Cardiac septum (tissue), 1 donor: ENCODE measurements at regions of chr3 and their contacts with region 1.

Region 1: DNA sequence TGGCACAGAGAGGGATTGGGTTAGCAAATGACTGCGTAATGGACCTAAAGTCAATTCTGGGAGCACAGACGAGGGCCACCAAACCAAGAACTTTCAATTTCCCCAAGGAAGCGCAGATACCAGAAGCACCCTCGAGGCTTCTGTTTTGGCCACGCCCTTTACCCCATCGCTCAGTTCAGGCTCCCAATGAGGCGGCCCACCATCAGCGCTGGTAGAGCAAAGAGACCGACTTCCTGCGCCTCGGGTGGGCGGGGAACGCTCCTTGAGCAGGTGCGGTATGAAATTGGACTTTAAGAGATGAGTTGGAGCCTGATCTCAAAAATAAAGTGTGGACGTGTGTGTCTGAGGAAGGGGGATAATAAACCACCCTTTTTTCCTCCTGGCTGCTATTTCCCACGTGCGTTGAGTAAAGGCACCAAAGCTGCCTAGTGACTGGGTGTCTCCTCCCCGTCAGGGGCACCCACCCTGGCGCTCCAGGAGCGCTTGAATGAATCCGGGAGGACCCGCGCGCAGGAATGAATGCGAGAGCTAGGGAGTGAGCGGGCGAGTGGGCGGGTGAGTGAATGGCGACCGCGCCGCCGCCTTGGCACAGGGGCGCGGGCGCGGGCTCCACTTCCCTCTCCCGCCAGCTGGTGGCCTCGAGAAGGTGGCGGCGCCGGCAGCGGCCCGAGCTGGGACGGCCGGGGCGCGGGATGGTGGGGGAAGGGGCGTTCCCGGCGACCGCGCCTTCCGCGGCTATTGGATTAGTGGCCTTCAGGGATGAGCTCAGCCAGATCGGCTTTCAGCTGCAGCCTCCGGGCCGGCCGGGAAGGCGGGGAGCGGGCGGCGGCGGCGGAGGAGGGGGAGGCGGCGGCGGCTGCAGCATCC is at the start of gene SPSB4:
- DNase-seq: peak; percentile 84
- total RNA-seq, gene SPSB4: 4.9 TPM

Region 2: DNA sequence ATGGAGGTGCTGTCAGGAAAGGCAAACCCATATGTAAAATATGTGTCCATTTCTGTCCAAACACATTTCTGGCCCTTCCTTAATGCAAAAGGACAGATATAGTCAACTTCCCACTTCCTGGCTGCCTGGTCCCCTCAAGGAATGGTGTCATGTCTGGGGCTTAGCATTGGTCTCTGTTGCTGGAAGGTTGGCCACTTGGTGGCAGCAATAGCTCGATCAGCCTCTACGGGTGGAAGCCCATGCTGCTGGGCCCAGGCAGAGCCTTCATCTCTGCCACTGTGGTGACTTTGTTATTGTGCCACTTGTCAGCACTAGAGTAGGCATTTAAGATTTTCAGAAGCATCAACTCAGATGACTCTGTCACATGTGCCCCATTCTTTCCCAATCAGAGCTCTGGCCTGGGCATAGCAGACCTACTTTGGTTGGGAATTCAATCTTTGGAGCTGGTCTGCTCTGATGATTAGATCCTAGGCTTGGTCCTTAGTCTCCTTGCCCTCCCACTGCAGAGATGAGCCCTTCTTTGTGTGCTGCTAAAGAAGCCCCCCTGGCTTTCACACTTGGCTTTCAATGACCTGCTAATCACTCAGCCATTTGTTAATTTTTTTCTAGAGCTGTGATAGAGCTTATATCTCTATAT is 50.7 kb before region 1 on chr3:
- intact Hi-C with region 1: no loop called
- DNase-seq: no peak

Region 3: DNA sequence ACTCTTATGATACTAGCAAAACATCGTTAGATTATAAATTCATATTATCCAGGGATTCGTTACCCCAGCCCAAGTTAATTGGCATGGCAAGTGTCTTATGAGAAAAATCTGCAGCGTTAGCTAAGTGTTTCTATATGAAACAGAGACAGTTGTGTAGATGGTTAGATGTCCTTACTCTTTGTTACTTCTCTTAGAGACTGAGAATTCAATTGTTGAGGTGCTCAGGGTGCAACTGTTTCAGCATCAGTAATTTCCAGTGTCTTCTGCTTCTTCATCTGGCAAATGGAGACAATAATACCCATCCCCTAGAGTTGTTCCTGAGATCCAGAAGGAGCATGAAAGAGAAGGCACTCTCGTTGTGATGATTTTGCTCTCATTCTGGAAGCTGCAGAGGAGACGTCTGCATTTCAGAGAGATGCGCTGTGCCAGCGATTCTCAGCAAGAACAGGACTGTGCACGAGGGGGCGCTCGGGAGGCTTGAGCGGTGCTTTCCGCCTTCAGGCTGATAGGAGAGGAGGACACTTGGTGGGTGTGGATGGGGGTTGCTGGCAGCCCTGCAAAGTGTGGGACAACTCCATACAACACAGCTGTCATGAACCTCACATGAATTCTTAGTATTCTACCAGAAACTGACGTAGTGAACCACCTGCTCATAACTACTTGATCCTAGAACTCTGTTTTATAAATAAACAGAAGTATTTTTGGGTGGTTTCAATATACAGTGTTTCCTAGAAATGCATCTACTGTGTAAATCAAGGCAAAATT is 39.4 kb before region 1 on chr3:
- intact Hi-C with region 1: loop called (anchors 5 kb)
- DNase-seq: peak; percentile 87

Region 4: DNA sequence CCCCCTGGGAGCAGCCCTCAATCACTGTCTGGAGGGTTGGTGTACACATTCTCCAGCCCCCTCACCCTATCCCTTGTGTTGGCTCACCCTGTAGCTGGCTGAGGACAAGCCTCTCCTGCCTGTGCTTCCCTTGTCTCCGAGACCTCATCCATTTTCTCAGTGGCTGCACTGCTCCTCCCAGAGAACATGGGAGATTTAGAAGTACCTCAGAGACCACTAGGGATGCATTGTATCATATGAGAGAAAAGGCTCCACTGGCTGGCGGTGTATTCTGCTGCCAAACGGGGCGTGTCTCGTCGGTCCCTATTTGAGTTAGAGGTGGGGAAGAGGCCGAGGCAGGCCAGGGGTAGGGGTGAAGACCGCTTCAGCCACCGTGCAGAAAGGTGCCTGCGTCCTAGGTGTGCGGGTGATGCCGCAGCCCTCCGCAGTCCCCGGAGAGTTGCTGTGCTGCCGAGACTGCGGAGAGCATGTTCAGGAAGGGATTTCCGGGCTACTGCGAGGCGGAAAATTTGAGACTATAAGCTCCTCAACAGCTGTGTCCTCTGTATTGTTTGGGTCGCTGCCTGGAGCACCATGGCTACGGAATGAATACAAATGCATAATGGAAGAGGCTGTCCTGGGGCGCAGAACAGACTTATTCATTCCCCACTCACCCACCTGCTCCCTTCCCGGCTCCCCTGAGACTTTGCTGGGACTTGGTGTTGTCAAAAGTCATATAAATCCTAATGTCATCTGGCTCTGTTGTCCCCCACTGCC is 44.2 kb after region 1 on chr3:
- intact Hi-C with region 1: loop called (anchors 5 kb)
- DNase-seq: peak; percentile 87

Region 5: GRCh38 chr3:141105828-141106628 is 55.2 kb after region 1 on chr3:
- intact Hi-C with region 1: loop called (anchors 2 kb)
- DNase-seq: peak; percentile 55